Ovary (tissue), 10 donors: ENCODE measurements at regions of chrX and their contacts with region 1.

Region 1: GRCh38 chrX:43969504-43970501 is 3.4 kb downstream of the NDP start:
- DNase-seq: peak; percentile 43 to 61 (median 48)
- H3K4me3 ChIP-seq: no peak overlapping the region
- H3K27ac ChIP-seq: peak overlapping the region; percentile 58 to 78
- H3K4me1 ChIP-seq: no peaks in the 10 kb centered on the region
- H3K27me3 ChIP-seq: no peaks in the 10 kb centered on the region
- CTCF ChIP-seq: no peak
- EP300 ChIP-seq: no peak
- POLR2A ChIP-seq: no peak

Region 2: DNA sequence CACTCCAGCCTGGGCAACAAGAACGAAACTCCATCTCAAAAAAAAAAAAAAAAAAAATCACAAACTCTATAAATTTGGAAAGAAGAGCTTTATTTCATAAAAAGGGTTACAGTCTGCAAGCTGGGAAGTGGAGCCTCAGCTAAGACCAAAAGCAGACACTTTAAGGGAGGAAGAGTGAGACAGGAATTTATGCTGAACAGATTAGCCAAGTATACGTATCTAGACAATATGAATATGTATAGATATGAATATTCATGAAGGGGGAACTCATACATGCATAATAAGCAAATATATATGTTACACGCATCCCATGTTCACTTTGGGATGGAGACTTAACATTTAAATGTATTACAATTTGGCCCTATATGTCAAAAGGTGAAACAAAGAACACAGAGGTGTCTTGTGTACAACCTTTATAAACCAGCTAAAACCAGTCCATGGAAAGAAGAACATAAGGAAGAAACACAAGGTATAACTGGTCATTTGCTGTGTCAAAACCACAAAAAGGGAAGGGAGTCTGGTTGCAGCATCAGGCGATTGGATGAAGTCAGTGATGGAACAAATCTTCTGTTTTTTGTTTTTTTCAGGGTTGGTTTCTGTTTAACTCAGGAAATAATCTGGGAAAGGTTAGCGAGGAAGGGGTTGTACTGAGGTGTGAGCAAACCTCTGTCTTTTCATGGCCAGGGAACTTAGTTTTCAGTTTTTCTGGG is 443.7 kb before region 1 on chrX:
- intact Hi-C with region 1: no loop called
- DNase-seq: no peak
- H3K4me3 ChIP-seq: no peak overlapping the region
- H3K27ac ChIP-seq: no peak overlapping the region
- H3K4me1 ChIP-seq: no peaks in the 10 kb centered on the region
- H3K27me3 ChIP-seq: no peaks in the 10 kb centered on the region
- CTCF ChIP-seq: no peak
- EP300 ChIP-seq: no peak
- POLR2A ChIP-seq: no peak

Region 3: DNA sequence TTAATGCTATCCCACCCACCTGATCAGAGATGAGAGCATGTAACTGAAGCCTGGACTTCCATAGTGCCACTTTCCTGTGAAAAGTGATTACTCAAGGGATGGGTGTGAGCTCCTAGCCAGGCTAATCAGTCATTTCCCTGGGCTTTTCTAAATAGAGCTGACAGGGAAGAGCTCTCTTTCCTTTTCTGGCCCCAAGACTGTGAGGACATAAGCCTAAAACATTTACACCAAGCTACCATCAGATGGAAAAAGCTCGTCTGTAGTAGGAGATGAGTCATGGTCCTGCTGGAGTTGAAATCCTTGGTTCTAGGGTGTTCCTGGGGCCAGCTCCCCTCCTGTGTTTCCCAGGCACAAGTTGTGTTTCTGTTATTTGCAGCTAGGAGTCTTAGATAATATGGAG is 55.8 kb after region 1 on chrX:
- intact Hi-C with region 1: loop called in 1 of 4 experiments (anchors 10 kb)
- DNase-seq: peak in 1 of 5 donors; percentile 24
- H3K4me3 ChIP-seq: no peak overlapping the region
- H3K27ac ChIP-seq: no peak overlapping the region
- H3K4me1 ChIP-seq: no peaks in the 10 kb centered on the region
- H3K27me3 ChIP-seq: no peaks in the 10 kb centered on the region
- CTCF ChIP-seq: no peak
- EP300 ChIP-seq: no peak
- POLR2A ChIP-seq: no peak

Region 4: GRCh38 chrX:45186643-45187026 is 1216.8 kb after region 1 on chrX:
- intact Hi-C with region 1: loop called in 1 of 4 experiments (anchors 10 kb)
- DNase-seq: no peak
- H3K4me3 ChIP-seq: no peak overlapping the region
- H3K27ac ChIP-seq: peak overlapping the region in 1 of 2 donors; percentile 44
- H3K4me1 ChIP-seq: no peaks in the 10 kb centered on the region
- H3K27me3 ChIP-seq: no peaks in the 10 kb centered on the region
- CTCF ChIP-seq: no peak
- EP300 ChIP-seq: no peak
- POLR2A ChIP-seq: no peak